ENCODE measurements at regions of chr11 and their contacts with region 1.

Region 1: DNA sequence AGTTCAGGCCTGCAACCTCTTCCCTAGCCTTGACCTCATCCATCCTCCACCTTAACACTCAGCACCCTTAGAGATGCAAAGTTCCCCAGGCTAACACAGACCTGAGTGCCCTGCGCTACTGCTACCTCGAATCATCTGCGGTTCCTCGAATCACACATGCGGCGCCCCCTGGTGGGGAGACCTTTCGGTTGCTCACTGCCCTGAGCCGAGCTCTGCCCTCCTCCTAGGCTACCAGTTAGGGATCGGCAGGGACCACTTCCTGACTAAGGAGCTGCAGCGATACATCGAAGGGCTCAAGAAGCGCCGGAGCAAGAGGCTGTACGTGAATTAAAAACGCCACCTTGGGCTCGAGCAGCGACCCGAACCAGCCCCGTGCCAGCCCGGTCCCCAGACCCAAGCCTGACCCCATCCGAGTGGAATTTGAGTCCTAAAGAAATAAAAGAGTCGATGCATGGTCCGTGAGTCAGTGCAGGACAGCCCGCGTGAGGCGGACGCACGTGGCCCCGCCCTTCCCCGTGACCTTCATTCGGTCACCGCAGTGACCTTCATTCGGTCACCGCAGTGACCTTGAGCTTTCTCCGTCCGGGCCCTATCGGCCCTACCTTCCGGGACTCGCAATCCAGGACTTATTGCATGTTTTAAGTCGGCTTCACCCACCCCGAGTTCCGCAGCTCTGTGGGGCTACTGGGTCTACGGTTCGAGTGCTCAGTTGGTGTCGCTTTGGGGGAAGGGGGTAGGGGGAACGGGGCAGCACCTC is 830 bp upstream of the ESRRA start:
- DNase-seq: peak; percentile 79 to 95 (median 90)
- ATAC-seq: peak; percentile 40
- H3K4me3 ChIP-seq: peak overlapping the region; percentile 97
- H3K4me3 Mint-ChIP-seq: peak overlapping the region; percentile 89 to 98 (median 94)
- H3K27ac ChIP-seq: peak overlapping the region; percentile 91
- H3K27ac Mint-ChIP-seq: peak overlapping the region; percentile 81 to 98 (median 95)
- H3K4me1 ChIP-seq: peaks cover 28 to 32% of the 10 kb centered on the region in 2 donors
- H3K4me1 Mint-ChIP-seq: peaks cover 25 to 43% (median 34%) of the 10 kb centered on the region in 7 donors
- H3K27me3 ChIP-seq: peaks cover 0 to 13% of the 10 kb centered on the region in 2 donors
- H3K27me3 Mint-ChIP-seq: peaks cover 13 to 29% (median 16%) of the 10 kb centered on the region in 5 donors

Region 2: GRCh38 chr11:63974259-63975143 is 330.0 kb before region 1 on chr11 and contains the start of gene COX8A:
- CTCF ChIA-PET with region 1: no interaction called
- POLR2A ChIA-PET with region 1: no interaction called
- intact Hi-C with region 1: loop called in 1 of 2 experiments (anchors 1 kb)
- DNase-seq: peak; percentile 65 to 97 (median 94)
- ATAC-seq: peak; percentile 99
- H3K4me3 ChIP-seq: peak within 1 kb of the TSS; percentile 87
- H3K4me3 Mint-ChIP-seq: peak within 1 kb of the TSS; percentile 98 to 100 (median 99)
- H3K27ac ChIP-seq: peak within 1 kb of the TSS; percentile 94
- H3K27ac Mint-ChIP-seq: peak within 1 kb of the TSS; percentile 94 to 99 (median 99)
- H3K4me1 ChIP-seq: peaks cover 10 to 11% of the 10 kb centered on the region in 2 donors
- H3K4me1 Mint-ChIP-seq: peaks cover 12 to 36% (median 29%) of the 10 kb centered on the region in 7 donors
- H3K27me3 ChIP-seq: no peaks in the 10 kb centered on the region
- H3K27me3 Mint-ChIP-seq: peaks cover 0 to 2% (median 0%) of the 10 kb centered on the region in 5 donors
- total RNA-seq, gene COX8A: 90.9 to 363 (median 105) TPM

Region 3: DNA sequence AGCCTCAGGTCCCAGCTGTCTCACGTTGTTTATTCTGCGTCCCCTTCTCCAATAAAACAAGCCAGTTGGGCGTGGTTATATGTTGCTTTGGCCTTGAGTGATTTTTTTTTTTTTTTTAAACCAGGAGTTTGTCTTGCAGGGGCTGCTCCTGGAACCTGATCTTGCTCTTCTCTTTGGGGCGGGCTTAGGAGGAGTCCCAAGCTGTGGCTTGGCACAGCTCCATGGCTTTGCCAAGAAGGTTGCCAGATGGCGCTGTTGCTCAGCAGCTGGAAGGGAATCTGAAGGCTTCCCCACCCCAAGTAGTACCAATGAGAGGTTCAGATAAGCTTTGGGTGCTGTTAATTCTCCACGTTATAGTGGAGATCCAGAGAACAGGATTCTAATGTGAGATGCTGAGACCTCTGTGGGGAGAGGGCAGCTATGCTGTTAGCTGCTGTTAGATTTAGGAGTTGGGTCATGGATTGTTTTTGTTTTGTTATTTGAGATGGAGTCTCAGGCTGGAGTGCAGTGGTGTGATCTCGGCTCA is 100.0 kb before region 1 on chr11:
- CTCF ChIA-PET with region 1: interaction called, 165 read pairs
- POLR2A ChIA-PET with region 1: interaction called, 102 read pairs
- intact Hi-C with region 1: loop called (anchors 1 kb)
- DNase-seq: peak; percentile 61 to 89 (median 83)
- ATAC-seq: peak; percentile 75
- H3K4me3 ChIP-seq: no peak overlapping the region
- H3K4me3 Mint-ChIP-seq: peak overlapping the region; percentile 27 to 87 (median 68)
- H3K27ac ChIP-seq: no peak overlapping the region
- H3K27ac Mint-ChIP-seq: peak overlapping the region; percentile 43 to 98 (median 86)
- H3K4me1 ChIP-seq: peaks cover 28 to 32% of the 10 kb centered on the region in 2 donors
- H3K4me1 Mint-ChIP-seq: peaks cover 25 to 51% (median 36%) of the 10 kb centered on the region in 7 donors
- H3K27me3 ChIP-seq: no peaks in the 10 kb centered on the region
- H3K27me3 Mint-ChIP-seq: no peaks in the 10 kb centered on the region

Region 4: DNA sequence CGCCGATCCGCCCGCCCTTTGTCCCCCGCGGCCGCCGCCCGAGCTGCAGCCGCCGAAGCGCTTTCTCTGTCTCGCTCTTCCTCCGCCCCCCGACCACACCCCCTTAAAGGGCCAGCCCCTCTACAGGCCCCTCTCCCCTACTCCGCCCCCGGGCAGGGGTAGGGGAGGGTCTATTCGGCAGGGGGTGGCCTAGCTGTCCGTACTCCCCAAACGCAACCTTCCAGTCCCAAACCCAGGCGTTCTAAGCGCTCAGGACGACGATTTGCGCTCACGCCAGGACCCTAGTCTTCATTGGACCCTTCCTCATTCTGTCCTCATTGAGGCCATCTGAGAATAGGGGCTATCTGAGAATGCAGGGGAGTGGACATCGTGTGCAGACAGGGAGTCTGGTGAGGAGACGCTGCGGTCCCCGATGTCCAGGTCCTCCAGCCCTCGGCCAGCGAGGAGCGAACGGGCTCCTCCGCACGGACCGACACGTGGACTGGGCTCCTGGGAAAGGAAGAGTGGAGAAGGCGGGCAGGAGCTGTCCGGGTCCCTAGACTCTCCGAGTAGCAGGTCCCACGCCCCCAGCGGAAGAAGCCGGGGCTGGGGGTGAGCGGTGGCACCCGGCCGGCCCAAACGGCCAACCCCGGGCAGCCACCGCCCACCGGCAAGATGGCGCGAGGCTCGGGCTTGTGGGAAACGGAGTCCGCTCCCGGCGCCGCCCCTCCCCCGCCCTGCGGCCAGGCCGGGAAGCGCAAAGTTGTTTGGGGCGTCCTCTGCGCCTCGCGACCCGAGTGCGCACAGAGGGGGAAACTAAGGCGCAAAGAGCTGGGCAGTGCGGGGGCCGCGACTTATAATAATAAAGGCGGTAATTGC is 57.4 kb before region 1 on chr11 and contains the start of gene PPP1R14B:
- CTCF ChIA-PET with region 1: interaction called, 9 read pairs
- POLR2A ChIA-PET with region 1: interaction called, 9 read pairs
- intact Hi-C with region 1: loop called (anchors 1 kb)
- DNase-seq: peak; percentile 55 to 88 (median 70)
- ATAC-seq: peak; percentile 75
- H3K4me3 ChIP-seq: peak within 1 kb of the TSS; percentile 100
- H3K4me3 Mint-ChIP-seq: peak within 1 kb of the TSS; percentile 83 to 93 (median 88)
- H3K27ac ChIP-seq: peak within 1 kb of the TSS; percentile 64
- H3K27ac Mint-ChIP-seq: peak within 1 kb of the TSS; percentile 65 to 88 (median 85)
- H3K4me1 ChIP-seq: peaks cover 25 to 27% of the 10 kb centered on the region in 2 donors
- H3K4me1 Mint-ChIP-seq: peaks cover 7 to 46% (median 32%) of the 10 kb centered on the region in 7 donors
- H3K27me3 ChIP-seq: no peaks in the 10 kb centered on the region
- H3K27me3 Mint-ChIP-seq: peaks cover 0 to 3% (median 0%) of the 10 kb centered on the region in 5 donors
- total RNA-seq, gene PPP1R14B: 20.1 to 116 (median 26.0) TPM

Region 5: DNA sequence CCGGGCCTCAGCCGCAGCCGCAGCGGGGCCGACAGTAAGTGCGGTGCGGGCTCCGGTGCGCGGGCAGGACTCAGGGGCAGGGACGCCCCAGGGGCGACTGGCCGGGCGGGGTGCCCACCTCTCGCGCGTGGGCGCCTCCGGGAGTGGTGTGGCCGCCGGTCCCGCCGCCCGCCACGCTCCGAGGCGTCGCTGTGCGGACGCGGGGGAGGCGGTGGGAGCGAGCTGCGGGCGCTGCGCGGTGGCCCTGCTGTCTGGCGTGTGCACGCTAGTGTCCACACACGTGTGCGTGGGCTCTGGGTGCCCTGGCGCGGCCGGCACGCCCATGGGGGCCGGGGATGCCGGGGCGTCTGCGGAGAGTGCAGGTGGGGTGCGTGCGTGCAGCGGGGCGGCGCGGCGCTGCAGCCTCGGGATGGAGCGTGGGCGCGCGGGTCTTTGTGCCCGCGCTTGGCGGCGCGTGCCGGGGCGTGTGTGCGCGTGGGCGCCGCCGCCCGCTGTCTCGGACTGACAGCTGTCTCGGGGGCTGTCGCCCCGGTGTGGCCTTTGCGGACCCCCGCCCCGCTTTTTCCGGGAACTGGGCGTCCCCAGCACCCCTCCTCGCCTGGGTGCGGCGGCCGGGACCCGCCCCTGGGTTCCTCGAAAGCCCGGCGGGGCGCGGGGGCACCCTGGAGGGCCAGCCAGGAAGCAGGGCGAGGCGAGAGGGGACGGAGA is 12.6 kb before region 1 on chr11:
- CTCF ChIA-PET with region 1: interaction called, 9 read pairs
- POLR2A ChIA-PET with region 1: interaction called, 4 read pairs
- intact Hi-C with region 1: loop called in 1 of 2 experiments (anchors 1 kb)
- DNase-seq: peak in 3 of 9 donors; percentile 25 to 28 (median 27)
- ATAC-seq: peak; percentile 57
- H3K4me3 ChIP-seq: no peak overlapping the region
- H3K4me3 Mint-ChIP-seq: peak overlapping the region in 3 of 10 donors; percentile 57 to 83 (median 77)
- H3K27ac ChIP-seq: no peak overlapping the region
- H3K27ac Mint-ChIP-seq: no peak overlapping the region
- H3K4me1 ChIP-seq: no peaks in the 10 kb centered on the region
- H3K4me1 Mint-ChIP-seq: peaks cover 5 to 11% (median 8%) of the 10 kb centered on the region in 7 donors
- H3K27me3 ChIP-seq: peaks cover 0 to 11% of the 10 kb centered on the region in 2 donors
- H3K27me3 Mint-ChIP-seq: peaks cover 39 to 57% (median 43%) of the 10 kb centered on the region in 5 donors

Region 6: DNA sequence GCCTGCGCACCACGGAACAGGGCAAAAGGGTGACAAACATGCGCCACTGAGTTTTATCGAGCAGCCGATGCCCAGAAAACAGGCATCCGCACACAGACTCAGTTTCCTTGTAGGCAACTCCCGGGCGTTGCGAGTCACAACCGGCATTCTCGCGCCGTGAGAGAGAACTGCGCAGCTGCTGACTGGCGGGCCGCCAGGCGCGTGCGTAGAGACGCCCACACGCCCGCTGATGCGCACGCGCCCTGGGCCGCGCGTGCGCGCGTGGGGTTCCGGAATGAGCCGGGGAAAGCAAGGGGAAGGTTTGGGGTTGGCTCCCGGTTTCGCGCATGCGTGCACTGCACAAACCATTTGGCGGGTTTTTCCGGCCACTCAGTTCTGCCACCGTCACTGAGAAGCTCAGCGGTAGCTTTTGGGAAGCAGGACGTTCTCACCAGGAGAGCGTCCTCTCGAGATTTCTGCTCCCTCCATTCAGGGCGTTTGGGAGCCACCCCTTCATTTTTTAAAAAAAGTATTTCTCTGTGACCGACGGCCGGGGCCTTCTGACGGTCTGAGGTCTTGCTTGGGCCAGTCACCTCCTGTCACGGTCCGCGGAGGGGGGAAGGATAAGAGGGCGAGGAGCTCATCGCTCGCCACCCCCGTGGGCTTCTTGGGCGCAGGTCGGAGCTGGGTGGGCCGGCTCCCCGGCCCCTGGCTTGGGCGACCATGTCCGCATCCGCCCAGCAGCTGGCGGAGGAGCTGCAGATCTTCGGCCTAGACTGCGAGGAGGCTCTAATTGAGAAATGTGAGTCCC is 957.3 kb after region 1 on chr11 and contains the start of gene POLA2:
- CTCF ChIA-PET with region 1: no interaction called
- POLR2A ChIA-PET with region 1: no interaction called
- intact Hi-C with region 1: loop called in 1 of 2 experiments (anchors 5 kb)
- DNase-seq: peak; percentile 94 to 99 (median 98)
- ATAC-seq: peak; percentile 96
- H3K4me3 ChIP-seq: peak within 1 kb of the TSS; percentile 88
- H3K4me3 Mint-ChIP-seq: peak within 1 kb of the TSS; percentile 83 to 95 (median 92)
- H3K27ac ChIP-seq: peak within 1 kb of the TSS; percentile 88
- H3K27ac Mint-ChIP-seq: peak within 1 kb of the TSS; percentile 91 to 98 (median 97)
- H3K4me1 ChIP-seq: peaks cover 9 to 18% of the 10 kb centered on the region in 2 donors
- H3K4me1 Mint-ChIP-seq: peaks cover 20 to 62% (median 50%) of the 10 kb centered on the region in 7 donors
- H3K27me3 ChIP-seq: no peaks in the 10 kb centered on the region
- H3K27me3 Mint-ChIP-seq: peaks cover 0 to 2% (median 0%) of the 10 kb centered on the region in 5 donors
- total RNA-seq, gene POLA2: 13.4 to 51.6 (median 27.8) TPM